ENCODE measurements at regions of chr19 and their contacts with region 1.

Region 1: DNA sequence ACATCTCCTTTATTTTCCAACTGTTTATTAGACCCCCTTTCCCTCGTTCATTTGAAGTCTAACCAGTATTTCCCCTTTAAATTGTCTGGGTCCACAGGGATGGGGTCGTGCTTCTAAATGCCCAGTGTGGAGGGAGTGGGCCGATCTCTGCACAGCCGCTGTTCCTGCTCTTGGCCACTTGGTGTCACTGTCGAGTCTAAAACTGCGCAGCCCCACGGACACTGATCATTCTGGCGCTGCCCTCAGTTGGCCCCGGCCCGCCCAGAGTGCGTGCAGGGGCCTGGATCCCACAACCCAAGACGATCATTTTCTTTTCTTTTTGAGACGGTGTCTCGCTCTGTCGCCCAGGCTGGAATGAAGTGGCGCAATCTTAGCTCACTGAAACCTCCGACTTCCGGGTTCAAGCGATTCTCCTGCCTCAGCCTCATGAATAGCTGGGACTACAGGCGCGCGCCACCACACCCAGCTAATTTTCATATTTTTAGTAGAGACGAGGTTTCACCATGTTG is 12.0 kb downstream of the WDR88 start:
- DNase-seq: peak in 9 of 10 donors; percentile 40 to 94 (median 65)

Region 2: GRCh38 chr19:33125929-33126388 is 18.0 kb before region 1 on chr19:
- intact Hi-C with region 1: no loop called
- DNase-seq: peak in 8 of 10 donors; percentile 24 to 88 (median 52)

Region 3: GRCh38 chr19:33186431-33187182 is 42.7 kb after region 1 on chr19:
- intact Hi-C with region 1: loop called (anchors 1 kb)
- DNase-seq: peak in 1 of 10 donors; percentile 16